Activated B cell treated with CpG ODN at 0.5 μM for 24 hours (primary cell): ENCODE measurements at regions of chr2 and their contacts with region 1.

Region 1: GRCh38 chr2:136117909-136118818 is at the start of gene CXCR4:
- DNase-seq: peak; percentile 90
- ATAC-seq: peak; percentile 51
- H3K4me3 Mint-ChIP-seq: peak within 1 kb of the TSS; percentile 96
- H3K27ac Mint-ChIP-seq: peak within 1 kb of the TSS; percentile 97
- H3K4me1 Mint-ChIP-seq: peaks cover 66% of the 10 kb centered on the region
- H3K27me3 Mint-ChIP-seq: no peaks in the 10 kb centered on the region
- CTCF ChIP-seq: no peak
- total RNA-seq, gene CXCR4: 200 and 213 TPM in 2 replicates

Region 2: GRCh38 chr2:135997380-135997779 is 120.8 kb before region 1 on chr2:
- CTCF ChIA-PET with region 1: interaction called, 9 read pairs
- POLR2A ChIA-PET with region 1: interaction called, 83 read pairs
- intact Hi-C with region 1: loop called (anchors 1 kb)
- DNase-seq: peak; percentile 41
- ATAC-seq: peak; percentile 97
- H3K4me3 Mint-ChIP-seq: peak overlapping the region; percentile 24
- H3K27ac Mint-ChIP-seq: peak overlapping the region; percentile 86
- H3K4me1 Mint-ChIP-seq: peaks cover 51% of the 10 kb centered on the region
- H3K27me3 Mint-ChIP-seq: no peaks in the 10 kb centered on the region
- CTCF ChIP-seq: no peak

Region 3: GRCh38 chr2:136059036-136059472 is 59.1 kb before region 1 on chr2:
- CTCF ChIA-PET with region 1: no interaction called
- POLR2A ChIA-PET with region 1: interaction called, 11 read pairs
- intact Hi-C with region 1: loop called (anchors 2 kb)
- DNase-seq: no peak
- ATAC-seq: peak; percentile 63
- H3K4me3 Mint-ChIP-seq: peak overlapping the region; percentile 62
- H3K27ac Mint-ChIP-seq: peak overlapping the region; percentile 77
- H3K4me1 Mint-ChIP-seq: peaks cover 76% of the 10 kb centered on the region
- H3K27me3 Mint-ChIP-seq: no peaks in the 10 kb centered on the region
- CTCF ChIP-seq: no peak

Region 4: DNA sequence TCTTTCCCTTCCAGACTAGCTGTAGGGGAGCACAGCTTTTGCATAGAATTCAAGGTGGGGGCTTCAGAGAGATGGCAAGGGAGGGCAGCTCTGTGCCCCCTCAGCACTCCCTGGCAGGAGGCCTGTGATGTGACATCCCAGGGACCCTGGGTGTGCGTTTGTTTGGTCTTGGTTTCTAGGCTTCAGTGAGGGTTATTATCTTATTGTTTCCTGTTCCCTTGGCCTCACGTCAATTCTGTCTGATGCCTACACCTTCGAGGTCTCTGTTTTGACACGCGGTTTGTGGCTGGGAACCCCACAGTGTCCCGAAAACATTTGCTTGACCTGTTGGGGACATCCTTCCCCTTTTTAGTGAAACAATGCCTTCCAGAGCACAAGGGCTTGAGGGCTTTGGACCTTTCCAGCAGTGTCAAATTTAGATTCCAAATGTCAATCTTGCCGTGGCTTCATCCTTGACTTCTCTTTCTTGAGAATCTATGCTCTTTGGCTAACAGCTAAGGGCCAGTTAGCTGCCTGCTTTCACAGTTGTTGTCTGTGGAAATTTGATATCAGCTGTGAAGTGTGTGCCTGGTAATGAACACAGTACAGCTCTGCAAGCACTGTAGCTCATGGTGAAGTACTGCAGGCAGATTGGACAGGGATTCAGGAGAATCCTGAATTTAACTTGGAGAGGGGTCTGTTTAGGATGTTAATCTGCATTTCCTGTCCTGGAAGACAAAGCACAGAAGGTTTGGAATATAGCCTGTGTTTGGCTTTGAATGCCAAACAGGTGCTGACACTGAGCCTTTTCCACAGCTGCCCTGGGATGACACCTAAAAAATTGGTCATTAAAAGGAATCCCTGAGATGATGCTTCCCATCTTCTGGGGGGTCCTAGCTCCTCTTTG is 108.0 kb after region 1 on chr2:
- CTCF ChIA-PET with region 1: no interaction called
- POLR2A ChIA-PET with region 1: interaction called, 44 read pairs
- intact Hi-C with region 1: no loop called
- DNase-seq: no peak
- ATAC-seq: peak; percentile 77
- H3K4me3 Mint-ChIP-seq: peak overlapping the region; percentile 2
- H3K27ac Mint-ChIP-seq: peak overlapping the region; percentile 87
- H3K4me1 Mint-ChIP-seq: peaks cover 67% of the 10 kb centered on the region
- H3K27me3 Mint-ChIP-seq: no peaks in the 10 kb centered on the region
- CTCF ChIP-seq: no peak

Region 5: DNA sequence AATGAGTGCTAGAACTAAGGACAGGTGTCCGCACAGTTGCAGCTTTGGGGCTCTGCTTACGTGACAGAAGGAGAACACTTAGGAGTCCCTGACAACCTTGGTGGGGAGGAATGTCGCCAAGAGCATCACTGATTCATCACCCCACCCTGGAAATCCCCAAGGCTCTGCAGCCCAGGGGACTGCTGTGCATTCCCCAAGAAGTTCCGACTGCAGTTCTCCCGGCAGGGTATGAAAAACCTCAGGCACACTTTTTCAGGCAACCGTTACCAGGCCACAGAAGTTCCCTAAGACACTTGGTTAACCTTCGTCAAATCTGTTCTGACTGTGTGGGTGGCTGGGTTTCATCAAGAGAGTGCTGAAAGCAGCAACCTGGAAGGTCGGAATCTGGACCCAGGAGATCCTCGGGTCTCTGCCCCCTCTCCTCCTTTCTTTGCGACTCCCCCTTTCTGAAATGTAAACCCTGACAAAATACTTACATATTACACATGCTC is 191.9 kb after region 1 on chr2:
- CTCF ChIA-PET with region 1: no interaction called
- POLR2A ChIA-PET with region 1: interaction called, 4 read pairs
- intact Hi-C with region 1: loop called (anchors 1 kb)
- DNase-seq: no peak
- ATAC-seq: peak; percentile 16
- H3K4me3 Mint-ChIP-seq: peak overlapping the region; percentile 1
- H3K27ac Mint-ChIP-seq: peak overlapping the region; percentile 4
- H3K4me1 Mint-ChIP-seq: peaks cover 30% of the 10 kb centered on the region
- H3K27me3 Mint-ChIP-seq: no peaks in the 10 kb centered on the region
- CTCF ChIP-seq: no peak